ENCODE measurements at regions of chr1 and their contacts with region 1.

Region 1: GRCh38 chr1:65059930-65060538 is 88.0 kb upstream of the AK4 start:
- DNase-seq: no peak
- H3K4me3 ChIP-seq: no peak overlapping the region
- H3K27ac ChIP-seq: no peak overlapping the region
- H3K4me1 ChIP-seq: peaks cover 0 to 3% (median 0%) of the 10 kb centered on the region in 4 experiments; a peak in 1 of 7 replicates
- H3K27me3 ChIP-seq: no peaks in the 10 kb centered on the region; a peak in 1 of 7 replicates
- CTCF ChIP-seq: peak in 1 of 3 experiments; percentile 25; a peak in 2 of 4 replicates
- EP300 ChIP-seq: no peak
- POLR2A ChIP-seq: no peak
- RAD21 ChIP-seq: peak; percentile 51 to 54

Region 2: DNA sequence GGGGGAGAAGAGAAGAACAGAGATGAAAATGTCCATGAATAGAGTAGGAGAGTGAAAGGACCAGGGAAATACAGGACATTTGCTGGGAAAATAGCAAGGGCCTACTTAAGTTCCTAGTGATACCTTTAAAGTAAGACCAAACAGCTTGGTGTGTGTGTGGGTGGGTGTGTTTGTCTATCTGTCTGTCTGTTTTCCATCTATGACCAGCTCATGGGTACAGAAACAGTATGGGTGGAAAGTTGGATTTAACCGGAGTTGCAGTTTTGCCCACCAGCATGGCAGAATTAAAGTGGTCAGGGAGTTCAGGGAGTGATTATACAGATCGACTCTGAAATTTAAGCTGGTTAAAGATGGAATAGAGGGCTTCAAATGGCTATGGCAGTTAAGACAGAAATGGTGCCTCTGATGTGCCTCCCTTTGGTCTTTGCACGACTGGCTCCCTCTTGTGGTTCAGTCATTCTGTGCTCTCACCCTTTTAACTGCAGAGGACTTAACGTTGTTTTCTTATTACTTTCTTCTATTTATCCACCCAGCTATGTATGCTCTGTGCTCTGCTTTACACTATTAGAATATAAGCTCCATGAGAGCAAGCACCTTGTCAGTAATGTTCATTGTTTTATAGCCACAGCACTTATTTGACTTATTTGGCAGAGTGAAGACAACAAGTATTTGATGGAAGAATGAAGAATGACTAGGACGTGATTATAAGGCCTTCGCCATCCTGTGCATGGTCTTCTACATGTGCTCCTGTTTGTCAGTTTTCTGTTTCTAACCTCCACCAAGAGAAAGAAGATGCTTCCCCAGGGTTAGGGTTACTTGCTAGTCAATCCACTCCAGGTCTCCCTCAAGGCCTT is 15.3 kb after region 1 on chr1:
- CTCF ChIA-PET with region 1: interaction called, 61 read pairs
- POLR2A ChIA-PET with region 1: interaction called, 3 read pairs
- DNase-seq: peak in 1 of 2 experiments; percentile 59
- H3K4me3 ChIP-seq: no peak overlapping the region
- H3K27ac ChIP-seq: no peak overlapping the region
- H3K4me1 ChIP-seq: no peaks in the 10 kb centered on the region
- H3K27me3 ChIP-seq: no peaks in the 10 kb centered on the region; a peak in 1 of 7 replicates
- CTCF ChIP-seq: peak; percentile 52 to 81 (median 76)
- EP300 ChIP-seq: no peak
- POLR2A ChIP-seq: no peak
- RAD21 ChIP-seq: peak; percentile 83

Measured in H1 (cell line).